ENCODE measurements at regions of chr2 and their contacts with region 1.

Region 1: DNA sequence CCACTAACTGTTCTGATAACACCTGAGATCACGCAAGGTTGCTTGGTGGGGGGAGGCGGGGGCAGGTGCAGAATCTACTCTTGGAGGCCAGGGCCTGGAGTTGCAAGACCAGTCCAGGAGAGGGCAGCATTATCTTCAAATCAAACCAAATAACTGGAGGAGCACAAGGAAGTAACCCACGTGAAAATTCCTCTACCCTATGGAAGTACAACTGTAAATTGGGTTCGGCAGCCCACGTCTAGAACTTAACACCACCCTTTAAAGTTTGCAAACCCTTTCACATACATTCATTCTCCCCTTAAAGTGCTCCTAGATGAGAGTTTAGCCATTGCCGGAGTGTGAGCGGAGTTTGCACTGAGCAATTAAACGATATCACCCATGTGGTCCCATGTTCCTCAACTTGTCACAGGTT is 19.6 kb upstream of the CXCR1 start:
- DNase-seq: peak; percentile 64 to 65
- H3K4me3 ChIP-seq: no peak overlapping the region
- H3K27ac ChIP-seq: no peak overlapping the region
- H3K4me1 ChIP-seq: peaks cover 0 to 4% of the 10 kb centered on the region in 2 donors
- H3K27me3 ChIP-seq: no peaks in the 10 kb centered on the region
- CTCF ChIP-seq: peak; percentile 49 to 84 (median 72)
- POLR2A ChIP-seq: no peak

Region 2: GRCh38 chr2:218125626-218126080 is 60.7 kb before region 1 on chr2 and contains the start of gene CXCR2:
- intact Hi-C with region 1: no loop called
- DNase-seq: peak in 1 of 2 donors; percentile 4
- H3K4me3 ChIP-seq: no peak within 1 kb of the TSS
- H3K27ac ChIP-seq: no peak within 1 kb of the TSS
- H3K4me1 ChIP-seq: no peaks in the 10 kb centered on the region
- H3K27me3 ChIP-seq: no peaks in the 10 kb centered on the region
- CTCF ChIP-seq: no peak
- POLR2A ChIP-seq: no peak
- total RNA-seq, gene CXCR2: 0.59 TPM in 1 of 4 donors, not detected in the others

Region 3: GRCh38 chr2:218257390-218257981 is 71.1 kb after region 1 on chr2:
- intact Hi-C with region 1: loop called (anchors 10 kb)
- DNase-seq: no peak
- H3K4me3 ChIP-seq: no peak overlapping the region
- H3K27ac ChIP-seq: no peak overlapping the region
- H3K4me1 ChIP-seq: peaks cover 0 to 30% of the 10 kb centered on the region in 2 donors
- H3K27me3 ChIP-seq: no peaks in the 10 kb centered on the region
- CTCF ChIP-seq: peak in 3 of 6 experiments; percentile 32 to 50 (median 39)
- POLR2A ChIP-seq: no peak

Region 4: DNA sequence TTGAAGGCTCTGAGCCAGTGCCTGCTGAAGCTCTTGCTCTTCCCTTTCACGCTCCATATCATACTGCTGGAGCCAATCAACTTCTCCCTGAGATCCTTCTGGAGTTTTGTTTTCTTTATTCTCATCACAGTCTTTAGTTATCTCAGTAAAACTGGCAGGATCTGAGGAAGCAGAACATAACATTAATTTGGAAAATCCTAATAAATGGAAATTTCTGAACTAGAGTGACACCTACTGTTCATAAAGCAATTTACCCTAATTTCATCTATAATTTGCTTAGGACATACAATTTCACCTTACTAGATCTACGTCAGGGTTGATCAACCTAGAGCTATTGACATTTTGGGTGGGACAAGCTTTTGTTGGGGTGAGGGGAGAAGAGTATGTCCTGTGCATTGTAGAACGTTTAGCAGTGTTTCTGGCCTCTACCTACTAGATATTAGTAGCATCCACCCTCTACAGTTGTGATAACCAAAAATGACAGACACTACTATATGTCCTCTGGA is 279.7 kb after region 1 on chr2:
- intact Hi-C with region 1: loop called (anchors 10 kb)
- DNase-seq: no peak
- H3K4me3 ChIP-seq: no peak overlapping the region
- H3K27ac ChIP-seq: peak overlapping the region in 1 of 3 donors; percentile 13
- H3K4me1 ChIP-seq: peaks cover 0 to 11% of the 10 kb centered on the region in 2 donors
- H3K27me3 ChIP-seq: no peaks in the 10 kb centered on the region
- CTCF ChIP-seq: peak in 4 of 6 experiments; percentile 29 to 60 (median 51)
- POLR2A ChIP-seq: no peak